ENCODE measurements at regions of chr1 and their contacts with region 1.

Region 1: GRCh38 chr1:42335050-42335808 is at the start of gene FOXJ3:
- DNase-seq: peak; percentile 87 to 98 (median 91)

Region 2: GRCh38 chr1:42035830-42036604 is 299.2 kb before region 1 on chr1:
- intact Hi-C with region 1: loop called (anchors 10 kb)
- DNase-seq: peak; percentile 91 to 99 (median 96)

Region 3: GRCh38 chr1:42173155-42173933 is 161.9 kb before region 1 on chr1:
- intact Hi-C with region 1: loop called (anchors 2 kb)
- DNase-seq: peak; percentile 48 to 96 (median 76)

Region 4: GRCh38 chr1:42266253-42267135 is 68.7 kb before region 1 on chr1:
- intact Hi-C with region 1: loop called (anchors 10 kb)
- DNase-seq: no peak

Region 5: GRCh38 chr1:42456010-42456758 is 121.0 kb after region 1 on chr1 and contains the starts of genes PPCS and ZMYND12:
- intact Hi-C with region 1: loop called (anchors 5 kb)
- DNase-seq: peak; percentile 72 to 96 (median 80)

Region 6: GRCh38 chr1:42681741-42682483 is 346.7 kb after region 1 on chr1 and contains the start of gene YBX1:
- intact Hi-C with region 1: loop called (anchors 10 kb)
- DNase-seq: peak; percentile 92 to 99 (median 95)

Region 7: GRCh38 chr1:42747125-42747524 is 411.9 kb after region 1 on chr1:
- intact Hi-C with region 1: loop called (anchors 10 kb)
- DNase-seq: peak in 9 of 10 donors; percentile 45 to 92 (median 56)

Measured in posterior cingulate gyrus (tissue), 11 donors.